Lower leg skin (tissue), 4 donors: ENCODE measurements at regions of chr12 and their contacts with region 1.

Region 1: DNA sequence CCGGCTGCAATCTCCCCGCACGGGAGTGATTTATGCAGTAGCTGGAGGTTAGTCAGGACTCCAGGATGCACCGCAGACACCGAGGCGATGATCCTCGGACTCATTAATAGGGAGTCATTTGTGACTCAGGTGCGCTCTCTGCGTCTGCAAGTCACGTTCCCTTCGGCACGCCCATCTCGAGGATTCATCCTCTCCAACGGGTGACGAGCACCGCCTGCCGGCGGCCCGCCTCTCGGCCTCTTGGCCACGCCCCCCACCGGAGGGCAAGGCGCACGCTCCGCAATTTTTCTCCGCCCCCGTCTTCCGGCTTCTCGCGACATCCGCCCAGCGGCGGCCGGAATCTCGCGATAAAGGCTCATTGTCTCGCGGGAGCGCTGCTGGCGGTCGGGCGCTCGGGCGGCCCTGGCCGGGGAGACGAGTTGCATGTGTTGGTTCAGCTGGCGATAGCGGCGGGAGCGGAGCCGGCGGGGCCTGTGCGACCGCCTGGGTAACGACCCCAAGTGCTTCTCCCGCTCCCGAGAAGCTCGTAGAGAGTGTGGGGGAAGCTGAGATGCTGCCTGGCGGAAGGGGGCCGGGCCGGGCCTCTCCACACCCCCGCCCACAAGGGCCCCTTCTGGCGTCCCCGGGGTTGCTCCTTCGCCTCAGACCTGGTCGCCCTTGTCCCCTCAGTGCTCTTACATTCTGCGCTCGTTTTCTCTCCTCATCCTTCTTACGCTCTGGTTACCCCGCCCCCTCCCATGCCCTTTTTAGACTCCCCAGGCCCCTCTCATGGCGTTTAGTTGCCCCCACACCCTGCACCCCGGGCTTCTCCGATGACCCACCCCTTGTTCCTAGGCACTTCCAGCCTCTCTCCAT is at the start of gene DENR:
- DNase-seq: peak; percentile 97 to 100
- H3K4me3 ChIP-seq: peak within 1 kb of the TSS; percentile 50
- CTCF ChIP-seq: peak in 1 of 3 donors; percentile 87
- POLR2A ChIP-seq: peak in 1 of 2 donors; percentile 56
- total RNA-seq, gene DENR: 22.1 to 30.4 (median 24.2) TPM

Region 2: GRCh38 chr12:122526683-122527477 is 225.8 kb before region 1 on chr12 and contains the starts of genes KNTC1 and RSRC2:
- intact Hi-C with region 1: loop called (anchors 5 kb)
- DNase-seq: peak; percentile 100
- H3K4me3 ChIP-seq: peak within 1 kb of the TSS; percentile 68
- CTCF ChIP-seq: no peak
- POLR2A ChIP-seq: peak in 1 of 2 donors; percentile 96
- total RNA-seq, gene KNTC1: 3.8 to 13.1 (median 10.4) TPM
- total RNA-seq, gene RSRC2: 44.2 to 97.9 (median 50.7) TPM

Region 3: GRCh38 chr12:122635471-122635870 is 117.2 kb before region 1 on chr12:
- intact Hi-C with region 1: loop called (anchors 5 kb)
- DNase-seq: peak in 1 of 2 donors; percentile 25
- H3K4me3 ChIP-seq: no peak overlapping the region
- CTCF ChIP-seq: no peak
- POLR2A ChIP-seq: no peak

Region 4: GRCh38 chr12:122767691-122768090 is 15.0 kb after region 1 on chr12:
- intact Hi-C with region 1: no loop called
- DNase-seq: no peak
- H3K4me3 ChIP-seq: no peak overlapping the region
- CTCF ChIP-seq: no peak
- POLR2A ChIP-seq: no peak